Endothelial cell of umbilical vein (primary cell): ENCODE measurements at regions of chr9 and their contacts with region 1.

Region 1: GRCh38 chr9:72390907-72391306 is 25.9 kb upstream of the ZFAND5 start:
- DNase-seq: no peak
- H3K4me3 ChIP-seq: no peak overlapping the region
- H3K27ac ChIP-seq: no peak overlapping the region
- H3K4me1 ChIP-seq: no peaks in the 10 kb centered on the region
- H3K27me3 ChIP-seq: no peaks in the 10 kb centered on the region
- CTCF ChIP-seq: no peak
- POLR2A ChIP-seq: no peak

Region 2: DNA sequence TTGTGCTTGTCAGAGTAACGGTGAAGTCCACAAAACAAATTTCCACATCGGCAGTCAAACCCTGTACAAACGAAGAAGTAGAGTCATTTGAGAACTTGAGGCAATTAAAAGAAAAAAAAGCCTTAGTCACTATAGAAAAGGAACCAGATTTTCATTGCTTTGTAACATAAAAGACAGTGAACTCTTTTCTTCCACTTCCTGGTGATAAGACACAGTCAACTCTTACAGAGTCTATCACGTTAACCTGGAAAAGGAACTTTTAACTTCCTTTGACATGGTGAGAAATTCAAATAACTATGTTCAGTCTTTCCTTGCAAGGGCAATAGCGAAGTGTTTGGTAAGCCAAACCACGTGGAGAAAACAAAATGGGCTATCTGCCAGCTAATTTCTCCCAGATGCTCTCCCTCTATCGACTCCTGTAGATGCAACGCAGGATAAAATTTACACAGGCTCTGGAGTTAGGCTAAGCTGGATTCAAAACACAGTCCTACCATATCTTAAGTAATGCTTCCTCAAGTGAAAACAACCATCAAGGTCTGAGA is 34.8 kb before region 1 on chr9:
- CTCF ChIA-PET with region 1: no interaction called
- POLR2A ChIA-PET with region 1: no interaction called
- dilution Hi-C with region 1: no loop called
- intact Hi-C with region 1: no loop called
- DNase-seq: no peak
- H3K4me3 ChIP-seq: no peak overlapping the region
- H3K27ac ChIP-seq: no peak overlapping the region
- H3K4me1 ChIP-seq: peaks cover 23% of the 10 kb centered on the region
- H3K27me3 ChIP-seq: no peaks in the 10 kb centered on the region
- CTCF ChIP-seq: no peak
- POLR2A ChIP-seq: no peak

Region 3: GRCh38 chr9:72401396-72401795 is 10.5 kb after region 1 on chr9:
- CTCF ChIA-PET with region 1: interaction called, 11 read pairs
- POLR2A ChIA-PET with region 1: no interaction called
- dilution Hi-C with region 1: no loop called
- intact Hi-C with region 1: no loop called
- DNase-seq: no peak
- H3K4me3 ChIP-seq: no peak overlapping the region
- H3K27ac ChIP-seq: no peak overlapping the region
- H3K4me1 ChIP-seq: no peaks in the 10 kb centered on the region
- H3K27me3 ChIP-seq: no peaks in the 10 kb centered on the region
- CTCF ChIP-seq: no peak
- POLR2A ChIP-seq: no peak

Region 4: GRCh38 chr9:72420783-72421182 is 29.9 kb after region 1 on chr9:
- CTCF ChIA-PET with region 1: no interaction called
- POLR2A ChIA-PET with region 1: no interaction called
- dilution Hi-C with region 1: no loop called
- intact Hi-C with region 1: no loop called
- DNase-seq: no peak
- H3K4me3 ChIP-seq: no peak overlapping the region
- H3K27ac ChIP-seq: no peak overlapping the region
- H3K4me1 ChIP-seq: no peaks in the 10 kb centered on the region
- H3K27me3 ChIP-seq: no peaks in the 10 kb centered on the region
- CTCF ChIP-seq: no peak
- POLR2A ChIP-seq: no peak